ENCODE measurements at regions of chr3 and their contacts with region 1.

Region 1: DNA sequence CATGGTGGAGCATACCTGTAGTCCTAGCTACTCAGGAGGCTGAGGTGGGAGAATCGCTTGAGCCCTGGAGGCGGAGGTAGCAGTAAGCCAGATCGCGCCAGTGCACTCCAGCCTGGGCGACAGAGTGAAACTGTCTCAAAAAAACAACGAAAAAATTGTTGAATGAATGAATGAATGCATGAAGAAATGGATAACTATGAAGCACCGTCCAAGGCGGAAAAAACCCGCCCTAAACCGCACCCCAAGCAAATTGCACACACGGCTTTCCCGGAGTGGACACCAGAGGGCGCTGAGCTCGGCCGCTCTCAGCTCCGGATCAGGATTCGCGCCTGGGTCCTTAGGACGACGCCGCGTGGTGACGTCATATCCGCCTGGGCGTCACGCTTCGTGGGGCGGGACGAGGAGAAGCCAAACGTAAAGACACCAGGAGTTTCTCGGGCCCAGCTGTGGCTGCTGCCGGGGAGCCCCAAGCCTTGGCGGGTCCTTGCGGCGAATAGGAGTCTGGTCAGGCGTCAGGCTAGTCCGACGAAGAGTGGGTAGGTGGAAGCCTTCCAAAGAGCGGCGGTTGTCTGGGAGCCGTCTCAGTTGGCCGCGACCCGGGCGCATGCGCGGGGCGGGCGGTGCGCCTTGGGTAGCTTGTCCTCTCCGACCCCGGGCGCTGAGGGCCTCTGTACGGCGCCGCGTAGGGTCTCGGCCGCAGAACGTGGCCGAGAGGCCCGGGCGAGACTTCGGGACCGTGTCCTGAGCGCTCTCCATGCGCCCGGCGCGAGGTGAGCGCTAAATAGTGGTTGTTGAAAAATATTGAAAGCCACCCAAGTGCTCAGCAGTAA is at the starts of genes HTD2 and RPP14:
- DNase-seq: peak; percentile 96
- CTCF ChIP-seq: peak; percentile 95

Region 2: GRCh38 chr3:57918123-57918837 is 387.8 kb before region 1 on chr3:
- in situ Hi-C with region 1: no loop called
- DNase-seq: no peak
- CTCF ChIP-seq: no peak

Region 3: DNA sequence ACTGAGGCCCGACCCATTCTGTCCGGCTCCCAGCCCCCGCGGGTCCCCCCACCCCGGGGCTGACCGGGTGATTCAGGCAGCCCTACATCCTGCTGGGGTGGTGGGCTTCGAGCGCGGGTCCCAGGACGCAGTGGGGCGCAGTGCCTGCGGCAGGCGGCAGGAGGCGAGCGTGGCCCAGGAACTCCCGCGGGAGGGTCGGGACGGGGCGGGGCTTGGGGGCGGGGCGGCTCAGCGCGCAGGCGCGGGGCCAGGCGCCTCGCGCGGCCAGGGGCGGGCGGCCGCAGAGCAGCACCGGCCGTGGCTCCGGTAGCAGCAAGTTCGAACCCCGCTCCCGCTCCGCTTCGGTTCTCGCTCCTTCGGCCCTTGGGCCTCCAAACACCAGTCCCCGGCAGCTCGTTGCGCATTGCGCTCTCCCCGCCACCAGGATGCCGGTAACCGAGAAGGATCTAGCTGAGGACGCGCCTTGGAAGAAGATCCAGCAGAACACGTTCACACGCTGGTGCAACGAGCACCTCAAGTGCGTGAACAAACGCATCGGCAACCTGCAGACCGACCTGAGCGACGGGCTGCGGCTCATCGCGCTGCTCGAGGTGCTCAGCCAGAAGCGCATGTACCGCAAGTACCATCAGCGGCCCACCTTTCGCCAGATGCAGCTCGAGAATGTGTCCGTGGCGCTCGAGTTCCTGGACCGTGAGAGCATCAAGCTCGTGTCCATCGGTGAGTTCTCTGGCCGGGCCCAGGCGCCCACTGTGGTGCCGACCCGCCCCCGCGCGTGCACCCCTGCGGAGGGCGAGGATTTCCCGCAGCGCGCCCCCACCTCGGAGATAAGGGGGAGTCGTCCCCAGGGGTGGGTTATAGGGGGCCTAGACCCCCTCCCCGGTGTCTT is 297.7 kb before region 1 on chr3 and contains the start of gene FLNB:
- in situ Hi-C with region 1: loop called (anchors 10 kb)
- DNase-seq: peak; percentile 98
- CTCF ChIP-seq: peak; percentile 94

Region 4: GRCh38 chr3:58101499-58102389 is 204.4 kb before region 1 on chr3:
- in situ Hi-C with region 1: no loop called
- DNase-seq: no peak
- CTCF ChIP-seq: no peak

Measured in GM13976 (cell line).